ENCODE measurements at regions of chr6 and their contacts with region 1.

Region 1: DNA sequence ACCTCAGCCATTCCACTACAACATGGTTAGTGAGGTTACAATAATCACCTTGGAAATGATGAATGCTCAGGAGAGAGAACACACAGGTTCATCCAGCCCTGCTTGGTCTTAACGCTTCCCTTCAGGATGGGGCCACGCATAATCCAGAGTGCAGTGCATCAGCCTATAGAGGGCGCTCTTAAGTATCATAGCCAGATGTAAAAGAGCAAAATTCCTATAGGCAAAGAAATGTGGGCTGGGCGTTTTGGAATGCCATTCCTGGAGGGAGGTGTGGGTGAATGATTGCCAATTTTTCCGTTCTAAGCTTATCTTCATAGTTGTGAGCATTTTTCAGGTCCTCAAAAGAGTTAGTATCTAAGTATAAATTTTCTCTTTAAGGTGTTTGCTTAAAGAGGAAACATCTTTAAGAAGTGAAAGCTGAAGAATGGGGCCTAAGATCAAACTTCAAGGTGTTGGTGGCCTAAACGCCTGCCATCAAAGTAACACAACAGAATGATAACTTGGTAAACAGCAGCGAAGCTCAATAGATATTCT is 1.8 kb downstream of the RIPOR2 start:
- DNase-seq: peak; percentile 83
- ATAC-seq: peak; percentile 9
- H3K4me3 ChIP-seq: peak overlapping the region; percentile 72 to 100 (median 86)
- H3K4me3 Mint-ChIP-seq: peak overlapping the region; percentile 95
- H3K27ac ChIP-seq: peak overlapping the region; percentile 74 to 93
- H3K27ac Mint-ChIP-seq: peak overlapping the region; percentile 90
- H3K4me1 ChIP-seq: peaks cover 54% of the 10 kb centered on the region in 2 donors
- H3K4me1 Mint-ChIP-seq: peaks cover 68% of the 10 kb centered on the region
- H3K27me3 ChIP-seq: no peaks in the 10 kb centered on the region
- H3K27me3 Mint-ChIP-seq: no peaks in the 10 kb centered on the region
- CTCF ChIP-seq: peak; percentile 89

Region 2: GRCh38 chr6:24891004-24891403 is 42.9 kb before region 1 on chr6:
- CTCF ChIA-PET with region 1: interaction called, 15 read pairs
- POLR2A ChIA-PET with region 1: no interaction called
- intact Hi-C with region 1: loop called (anchors 5 kb)
- DNase-seq: no peak
- ATAC-seq: peak; percentile 28
- H3K4me3 ChIP-seq: no peak overlapping the region
- H3K4me3 Mint-ChIP-seq: peak overlapping the region; percentile 58
- H3K27ac ChIP-seq: peak overlapping the region in 1 of 2 donors; percentile 53
- H3K27ac Mint-ChIP-seq: peak overlapping the region; percentile 54
- H3K4me1 ChIP-seq: peaks cover 82 to 83% of the 10 kb centered on the region in 2 donors
- H3K4me1 Mint-ChIP-seq: peaks cover 88% of the 10 kb centered on the region
- H3K27me3 ChIP-seq: no peaks in the 10 kb centered on the region
- H3K27me3 Mint-ChIP-seq: no peaks in the 10 kb centered on the region
- CTCF ChIP-seq: no peak

Region 3: GRCh38 chr6:24919004-24919892 is 14.7 kb before region 1 on chr6:
- CTCF ChIA-PET with region 1: interaction called, 134 read pairs
- POLR2A ChIA-PET with region 1: interaction called, 4 read pairs
- intact Hi-C with region 1: loop called (anchors 1 kb)
- DNase-seq: peak; percentile 39
- ATAC-seq: peak; percentile 70
- H3K4me3 ChIP-seq: peak overlapping the region in 4 of 5 experiments; percentile 2 to 39 (median 16)
- H3K4me3 Mint-ChIP-seq: peak overlapping the region; percentile 84
- H3K27ac ChIP-seq: peak overlapping the region; percentile 36 to 68
- H3K27ac Mint-ChIP-seq: peak overlapping the region; percentile 92
- H3K4me1 ChIP-seq: peaks cover 95 to 99% of the 10 kb centered on the region in 2 donors
- H3K4me1 Mint-ChIP-seq: peaks cover 91% of the 10 kb centered on the region
- H3K27me3 ChIP-seq: no peaks in the 10 kb centered on the region
- H3K27me3 Mint-ChIP-seq: no peaks in the 10 kb centered on the region
- CTCF ChIP-seq: no peak

Region 4: DNA sequence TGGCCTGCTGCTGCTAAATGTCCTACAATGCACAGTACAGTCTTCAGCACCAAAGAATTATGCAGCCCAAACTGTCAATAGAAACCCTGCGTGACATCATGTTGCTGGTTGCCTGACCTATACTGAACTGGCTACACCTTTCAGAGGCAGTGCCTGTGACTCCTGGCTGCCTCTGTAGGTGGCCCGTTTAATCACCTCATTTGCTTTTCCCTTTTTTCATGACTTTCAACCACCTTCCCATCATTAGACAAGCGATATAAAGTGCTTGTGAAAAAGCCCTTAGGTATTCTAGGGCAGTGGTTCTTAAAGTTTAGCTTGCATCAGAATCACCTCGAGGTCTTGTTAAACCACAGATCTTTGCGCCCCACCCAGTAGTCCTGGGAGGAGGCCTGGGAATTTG is 34.9 kb after region 1 on chr6:
- CTCF ChIA-PET with region 1: interaction called, 23 read pairs
- POLR2A ChIA-PET with region 1: interaction called, 4 read pairs
- intact Hi-C with region 1: no loop called
- DNase-seq: no peak
- ATAC-seq: no peak
- H3K4me3 ChIP-seq: no peak overlapping the region
- H3K4me3 Mint-ChIP-seq: no peak overlapping the region
- H3K27ac ChIP-seq: no peak overlapping the region
- H3K27ac Mint-ChIP-seq: peak overlapping the region; percentile 7
- H3K4me1 ChIP-seq: peaks cover 34 to 44% of the 10 kb centered on the region in 2 donors
- H3K4me1 Mint-ChIP-seq: peaks cover 82% of the 10 kb centered on the region
- H3K27me3 ChIP-seq: no peaks in the 10 kb centered on the region
- H3K27me3 Mint-ChIP-seq: no peaks in the 10 kb centered on the region
- CTCF ChIP-seq: no peak

Region 5: DNA sequence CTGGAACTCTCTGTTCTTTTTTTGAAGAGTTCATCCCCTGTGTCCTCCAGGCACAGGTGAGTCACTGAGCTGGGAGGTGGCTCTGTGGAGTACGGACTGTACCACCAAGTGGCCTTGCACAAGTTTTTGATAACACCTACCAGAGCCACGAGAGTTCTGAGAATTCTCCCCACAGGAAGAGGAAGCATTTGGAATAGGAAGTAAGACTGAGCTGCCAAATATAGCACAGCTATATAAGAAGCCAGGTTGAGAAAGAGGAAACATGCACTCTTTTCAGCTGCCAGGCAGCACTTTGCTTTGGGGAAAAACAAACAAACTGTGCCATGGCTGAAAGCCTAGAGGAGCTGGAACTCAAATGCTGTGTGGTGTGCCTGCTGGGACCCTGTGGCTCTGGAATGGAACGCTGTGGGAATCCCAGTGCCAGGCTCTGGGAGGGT is 72.6 kb after region 1 on chr6:
- CTCF ChIA-PET with region 1: interaction called, 22 read pairs
- POLR2A ChIA-PET with region 1: interaction called, 23 read pairs
- intact Hi-C with region 1: no loop called
- DNase-seq: peak; percentile 87
- ATAC-seq: peak; percentile 76
- H3K4me3 ChIP-seq: peak overlapping the region in 3 of 5 experiments; percentile 18 to 44 (median 32)
- H3K4me3 Mint-ChIP-seq: peak overlapping the region; percentile 63
- H3K27ac ChIP-seq: peak overlapping the region; percentile 95 to 98
- H3K27ac Mint-ChIP-seq: peak overlapping the region; percentile 92
- H3K4me1 ChIP-seq: peaks cover 47% of the 10 kb centered on the region in 2 donors
- H3K4me1 Mint-ChIP-seq: peaks cover 67% of the 10 kb centered on the region
- H3K27me3 ChIP-seq: no peaks in the 10 kb centered on the region
- H3K27me3 Mint-ChIP-seq: no peaks in the 10 kb centered on the region
- CTCF ChIP-seq: no peak